HCT116 (cell line): ENCODE measurements at regions of chr3 and their contacts with region 1.

Region 1: GRCh38 chr3:30199096-30199759 is 407.2 kb upstream of the TGFBR2 start:
- DNase-seq: peak; percentile 27
- ATAC-seq: peak; percentile 77
- H3K4me3 ChIP-seq: no peak overlapping the region
- H3K27ac ChIP-seq: no peak overlapping the region
- H3K4me1 ChIP-seq: no peaks in the 10 kb centered on the region
- H3K27me3 ChIP-seq: no peaks in the 10 kb centered on the region
- CTCF ChIP-seq: peak; percentile 62 to 86 (median 82)
- POLR2A ChIP-seq: no peak
- RAD21 ChIP-seq: peak; percentile 91

Region 2: DNA sequence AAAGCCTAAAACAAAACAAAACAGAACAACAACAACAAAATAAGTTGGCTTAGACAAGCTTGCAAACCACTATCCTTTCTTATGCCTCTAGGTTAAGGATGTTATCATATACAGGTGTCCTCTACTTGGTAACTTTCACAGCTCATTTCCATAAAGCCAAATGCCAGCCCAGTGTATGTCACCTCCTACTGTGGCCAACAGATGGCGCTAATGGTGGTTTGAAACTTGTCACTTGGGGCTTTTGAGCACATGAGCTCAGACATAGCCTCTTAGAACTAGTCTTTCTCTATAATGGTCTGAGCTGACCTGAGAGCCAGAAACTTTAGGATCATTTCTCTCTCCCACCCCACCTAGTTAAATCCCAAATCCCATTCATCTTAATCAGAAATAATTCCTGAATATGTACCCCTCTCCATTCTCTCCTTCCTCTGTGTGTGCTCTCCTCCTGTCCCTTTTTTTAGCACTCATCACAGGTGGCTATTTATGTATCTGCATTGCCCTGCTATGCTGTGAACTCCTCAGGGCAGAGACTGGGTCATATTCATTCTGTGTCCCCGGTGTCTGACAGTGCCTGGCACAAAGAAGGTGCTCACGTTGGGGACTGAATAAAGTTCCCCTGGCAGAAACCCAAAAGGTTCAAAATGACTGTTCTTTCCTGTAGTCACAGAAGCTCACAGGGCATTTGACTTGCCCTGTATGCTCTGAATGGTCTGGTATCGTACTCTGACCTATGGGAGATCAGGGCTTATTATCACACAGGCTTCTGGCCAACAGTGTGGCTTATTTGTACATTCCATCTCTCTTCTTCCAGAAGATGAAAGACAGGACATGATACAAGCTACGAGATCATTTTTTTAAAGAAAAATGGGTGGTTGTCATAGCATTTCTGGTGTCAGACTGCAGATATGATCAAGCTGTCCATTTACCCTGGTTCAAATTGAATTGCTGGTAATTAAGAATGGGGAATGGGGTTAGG is 1531.3 kb before region 1 on chr3:
- CTCF ChIA-PET with region 1: interaction called, 10 read pairs
- POLR2A ChIA-PET with region 1: no interaction called
- RAD21 ChIA-PET with region 1: no interaction called
- intact Hi-C with region 1: no loop called
- DNase-seq: peak; percentile 51
- ATAC-seq: peak; percentile 99
- H3K4me3 ChIP-seq: no peak overlapping the region
- H3K27ac ChIP-seq: no peak overlapping the region
- H3K4me1 ChIP-seq: no peaks in the 10 kb centered on the region
- H3K27me3 ChIP-seq: peaks cover 19% of the 10 kb centered on the region; the same call in 1 of the 2 replicates
- CTCF ChIP-seq: peak; percentile 47 to 85 (median 81); a peak in 5 of 6 replicates
- POLR2A ChIP-seq: no peak
- RAD21 ChIP-seq: peak; percentile 55

Region 3: GRCh38 chr3:30042274-30042859 is 156.9 kb before region 1 on chr3:
- CTCF ChIA-PET with region 1: interaction called, 111 read pairs
- POLR2A ChIA-PET with region 1: no interaction called
- RAD21 ChIA-PET with region 1: interaction called, 17 to 29 read pairs
- intact Hi-C with region 1: loop called (anchors 1 kb)
- DNase-seq: peak; percentile 76
- ATAC-seq: peak; percentile 84
- H3K4me3 ChIP-seq: no peak overlapping the region
- H3K27ac ChIP-seq: no peak overlapping the region
- H3K4me1 ChIP-seq: no peaks in the 10 kb centered on the region
- H3K27me3 ChIP-seq: no peaks in the 10 kb centered on the region
- CTCF ChIP-seq: peak; percentile 60 to 83 (median 79)
- POLR2A ChIP-seq: no peak
- RAD21 ChIP-seq: peak; percentile 93

Region 4: GRCh38 chr3:30167541-30168011 is 31.7 kb before region 1 on chr3:
- CTCF ChIA-PET with region 1: interaction called, 11 read pairs
- POLR2A ChIA-PET with region 1: no interaction called
- RAD21 ChIA-PET with region 1: no interaction called
- intact Hi-C with region 1: no loop called
- DNase-seq: peak; percentile 63
- ATAC-seq: peak; percentile 93
- H3K4me3 ChIP-seq: peak overlapping the region in 1 of 2 experiments; percentile 31; a peak in 2 of 4 replicates
- H3K27ac ChIP-seq: peak overlapping the region; percentile 52
- H3K4me1 ChIP-seq: peaks cover 10 to 28% of the 10 kb centered on the region in 2 experiments; a peak in 2 of 4 replicates
- H3K27me3 ChIP-seq: no peaks in the 10 kb centered on the region
- CTCF ChIP-seq: no peak
- POLR2A ChIP-seq: no peak
- RAD21 ChIP-seq: no peak

Region 5: DNA sequence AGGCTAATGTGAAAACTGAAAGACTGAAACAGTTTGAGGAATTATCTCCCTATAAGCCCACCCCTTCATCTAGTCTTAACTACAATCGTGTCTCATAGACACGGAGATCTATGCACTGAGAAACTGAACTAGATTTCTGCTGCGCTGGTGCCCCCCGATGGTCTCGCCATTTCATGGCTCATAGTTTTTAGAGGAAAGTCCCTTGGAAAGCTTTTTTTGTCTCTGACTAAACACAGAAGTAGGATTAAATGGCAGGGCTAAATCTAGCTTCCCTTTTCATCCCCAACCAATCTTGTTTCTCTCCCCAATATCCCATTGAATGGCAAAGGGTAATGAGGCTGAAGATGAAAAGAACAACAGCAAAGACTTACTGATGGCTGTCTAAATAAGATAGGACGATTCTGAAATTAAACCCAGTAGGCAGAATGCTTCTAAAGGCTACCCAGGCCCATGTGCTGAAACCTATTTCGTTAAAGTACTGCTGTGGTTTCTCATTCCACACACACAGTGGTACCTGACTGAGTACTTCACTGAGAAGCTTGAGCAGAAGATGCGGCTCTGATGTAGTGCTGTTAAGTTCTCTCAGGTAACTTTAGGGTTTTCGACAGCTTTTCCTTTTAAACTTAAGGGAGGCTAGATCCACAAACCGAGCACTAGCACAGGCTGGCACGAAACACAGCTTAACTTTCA is 552.5 kb after region 1 on chr3:
- CTCF ChIA-PET with region 1: interaction called, 4 read pairs
- POLR2A ChIA-PET with region 1: no interaction called
- RAD21 ChIA-PET with region 1: no interaction called
- intact Hi-C with region 1: loop called (anchors 10 kb)
- DNase-seq: peak; percentile 15
- ATAC-seq: peak; percentile 71
- H3K4me3 ChIP-seq: no peak overlapping the region
- H3K27ac ChIP-seq: no peak overlapping the region
- H3K4me1 ChIP-seq: peaks cover 9 to 24% of the 10 kb centered on the region in 2 experiments; a peak in 3 of 4 replicates
- H3K27me3 ChIP-seq: no peaks in the 10 kb centered on the region
- CTCF ChIP-seq: peak; percentile 51 to 68 (median 56); a peak in 5 of 6 replicates
- POLR2A ChIP-seq: no peak
- RAD21 ChIP-seq: peak; percentile 78